Activated naive CD4-positive, alpha-beta T cell treated with anti-CD3 and anti-CD28 coated beads for 36 hours (primary cell): ENCODE measurements at regions of chr2 and their contacts with region 1.

Region 1: GRCh38 chr2:238203094-238203972 is at the start of gene ILKAP:
- DNase-seq: peak; percentile 89
- H3K4me3 Mint-ChIP-seq: peak within 1 kb of the TSS; percentile 80
- H3K27ac Mint-ChIP-seq: peak within 1 kb of the TSS; percentile 77
- H3K4me1 Mint-ChIP-seq: peaks cover 41% of the 10 kb centered on the region
- H3K27me3 Mint-ChIP-seq: no peaks in the 10 kb centered on the region
- total RNA-seq, gene ILKAP: 46.6 to 46.7 TPM

Region 2: DNA sequence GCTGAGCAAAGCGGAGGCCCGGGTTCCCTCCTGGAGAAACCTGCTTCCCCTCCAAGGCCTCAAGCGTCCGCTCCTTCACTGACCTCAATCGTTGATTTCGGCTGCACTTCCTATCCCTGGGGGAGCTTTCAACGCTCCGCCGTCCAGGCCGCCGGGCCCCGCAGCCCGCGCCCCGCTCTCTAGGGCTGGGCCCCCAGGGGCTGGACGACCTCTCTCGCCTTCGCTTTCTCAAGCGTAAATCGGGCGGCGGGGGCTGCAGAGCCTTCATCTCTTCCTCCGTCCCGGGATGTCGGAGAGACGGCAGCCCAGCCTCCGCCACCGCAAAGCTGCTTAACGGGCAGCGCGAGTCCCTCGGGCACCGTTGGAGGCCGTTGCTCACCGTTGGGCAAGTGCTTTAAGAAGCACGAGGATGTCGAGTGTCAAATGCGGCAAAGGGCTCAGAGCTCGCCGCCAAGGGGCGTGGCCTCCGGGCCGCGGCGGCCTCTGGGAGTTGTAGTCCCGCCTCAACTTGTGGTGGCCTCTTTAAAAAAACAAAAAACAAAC is 28.0 kb after region 1 on chr2:
- CTCF ChIA-PET with region 1: no interaction called
- intact Hi-C with region 1: loop called (anchors 1 kb)
- DNase-seq: peak; percentile 84
- H3K4me3 Mint-ChIP-seq: peak overlapping the region; percentile 74
- H3K27ac Mint-ChIP-seq: no peak overlapping the region
- H3K4me1 Mint-ChIP-seq: peaks cover 16% of the 10 kb centered on the region
- H3K27me3 Mint-ChIP-seq: peaks cover 11% of the 10 kb centered on the region